Tibial artery (tissue), 4 donors: ENCODE measurements at regions of chr10 and their contacts with region 1.

Region 1: GRCh38 chr10:49094673-49095072 is 20.6 kb downstream of the VSTM4 start:
- DNase-seq: no peak
- H3K4me3 ChIP-seq: no peak overlapping the region
- H3K27ac ChIP-seq: peak overlapping the region; percentile 17 to 51
- H3K4me1 ChIP-seq: peaks cover 0 to 43% (median 19%) of the 10 kb centered on the region in 4 donors
- H3K27me3 ChIP-seq: no peaks in the 10 kb centered on the region
- CTCF ChIP-seq: no peak

Region 2: DNA sequence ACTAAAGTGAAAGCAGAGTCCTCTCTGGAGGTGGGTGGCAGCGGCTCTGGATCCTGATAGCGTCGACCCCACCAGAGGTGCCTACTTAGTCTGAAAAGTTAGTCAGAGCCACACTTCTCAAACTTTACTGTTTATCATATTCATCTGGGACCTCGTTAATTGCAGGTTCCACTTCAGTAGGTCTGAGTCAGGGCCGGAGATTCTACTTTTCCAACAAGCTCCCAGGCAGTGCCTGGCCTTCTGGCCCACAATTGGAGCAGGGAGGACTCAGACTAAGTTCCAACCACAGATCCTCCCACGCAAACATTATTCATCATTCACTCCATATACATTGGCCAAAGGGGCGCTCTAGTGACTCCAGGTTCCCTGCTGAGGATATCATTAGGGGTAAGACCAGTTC is 57.5 kb before region 1 on chr10:
- intact Hi-C with region 1: no loop called
- DNase-seq: no peak
- H3K4me3 ChIP-seq: no peak overlapping the region
- H3K27ac ChIP-seq: no peak overlapping the region
- H3K4me1 ChIP-seq: no peaks in the 10 kb centered on the region
- H3K27me3 ChIP-seq: no peaks in the 10 kb centered on the region
- CTCF ChIP-seq: no peak

Region 3: GRCh38 chr10:50325449-50326171 is 1230.9 kb after region 1 on chr10:
- intact Hi-C with region 1: loop called (anchors 5 kb)
- DNase-seq: peak; percentile 87
- H3K4me3 ChIP-seq: no peak overlapping the region
- H3K27ac ChIP-seq: peak overlapping the region; percentile 67 to 70
- H3K4me1 ChIP-seq: peaks cover 0 to 59% (median 23%) of the 10 kb centered on the region in 4 donors
- H3K27me3 ChIP-seq: no peaks in the 10 kb centered on the region
- CTCF ChIP-seq: no peak